ENCODE measurements at regions of chr11 and their contacts with region 1.

Region 1: GRCh38 chr11:3037040-3037944 is 19.9 kb downstream of the CARS1 start:
- DNase-seq: peak; percentile 59
- ATAC-seq: peak; percentile 74
- H3K4me3 Mint-ChIP-seq: no peak overlapping the region
- H3K27ac Mint-ChIP-seq: peak overlapping the region; percentile 44
- H3K4me1 Mint-ChIP-seq: peaks cover 33% of the 10 kb centered on the region
- H3K27me3 Mint-ChIP-seq: no peaks in the 10 kb centered on the region

Region 2: GRCh38 chr11:3049430-3050243 is 12.3 kb after region 1 on chr11:
- CTCF ChIA-PET with region 1: interaction called, 11 read pairs
- DNase-seq: peak; percentile 93
- ATAC-seq: peak; percentile 98
- H3K4me3 Mint-ChIP-seq: peak overlapping the region; percentile 58
- H3K27ac Mint-ChIP-seq: peak overlapping the region; percentile 97
- H3K4me1 Mint-ChIP-seq: peaks cover 52% of the 10 kb centered on the region
- H3K27me3 Mint-ChIP-seq: no peaks in the 10 kb centered on the region

Region 3: GRCh38 chr11:3057069-3057963 is 20.0 kb after region 1 on chr11 and contains the start of gene CARS1:
- CTCF ChIA-PET with region 1: interaction called, 11 read pairs
- DNase-seq: peak; percentile 97
- ATAC-seq: peak; percentile 98
- H3K4me3 Mint-ChIP-seq: peak within 1 kb of the TSS; percentile 88
- H3K27ac Mint-ChIP-seq: peak within 1 kb of the TSS; percentile 88
- H3K4me1 Mint-ChIP-seq: peaks cover 38% of the 10 kb centered on the region
- H3K27me3 Mint-ChIP-seq: peaks cover 10% of the 10 kb centered on the region
- total RNA-seq, gene CARS1: 109 to 119 TPM

Region 4: DNA sequence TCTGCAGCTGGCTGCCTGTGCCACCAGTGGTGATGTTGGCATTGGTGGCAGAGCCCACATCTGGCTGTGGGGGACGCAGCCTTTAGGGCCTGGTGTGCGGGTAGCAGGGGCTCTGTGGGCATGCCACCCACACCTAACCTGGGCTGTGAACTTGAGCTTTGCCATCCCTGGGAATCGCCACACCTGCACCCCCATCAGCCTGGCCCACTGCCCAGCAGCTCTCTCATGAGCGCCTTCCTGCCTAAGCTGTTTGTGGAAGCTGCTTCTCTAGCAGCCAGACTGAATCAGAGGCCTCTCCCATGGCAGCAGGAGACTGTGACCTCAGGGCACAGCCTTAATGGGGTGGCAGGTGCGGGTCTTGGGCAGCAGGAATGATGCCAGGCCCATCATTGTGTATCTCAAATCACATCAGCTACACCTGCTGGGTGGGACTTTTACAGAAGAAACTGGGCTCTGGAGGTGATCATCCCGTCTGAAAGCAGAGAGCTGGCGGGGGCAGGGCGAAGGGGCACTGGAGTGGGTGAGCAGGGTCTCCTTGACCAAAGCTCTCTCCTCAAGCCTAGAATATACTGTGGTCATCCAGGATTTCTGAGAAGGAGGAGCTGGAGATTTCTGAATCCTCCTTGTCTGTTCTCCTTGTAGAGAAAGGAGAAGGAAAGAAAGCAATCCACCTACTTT is 37.8 kb after region 1 on chr11:
- CTCF ChIA-PET with region 1: no interaction called
- DNase-seq: no peak
- ATAC-seq: no peak
- H3K4me3 Mint-ChIP-seq: no peak overlapping the region
- H3K27ac Mint-ChIP-seq: no peak overlapping the region
- H3K4me1 Mint-ChIP-seq: no peaks in the 10 kb centered on the region
- H3K27me3 Mint-ChIP-seq: peaks cover 20% of the 10 kb centered on the region